Activated CD4-positive, alpha-beta T cell treated with anti-CD3 and anti-CD28 coated beads, Interleukin-2, amount 10 ng/mL, durations not matched to agents 24 days and 14 days (primary cell): ENCODE measurements at regions of chr1 and their contacts with region 1.

Region 1: GRCh38 chr1:183227963-183228649 is 42.0 kb downstream of the LAMC2 start:
- DNase-seq: peak; percentile 82
- H3K4me3 Mint-ChIP-seq: no peak overlapping the region
- H3K27ac Mint-ChIP-seq: no peak overlapping the region
- H3K4me1 Mint-ChIP-seq: peaks cover 6% of the 10 kb centered on the region
- H3K27me3 Mint-ChIP-seq: peaks cover under 1% of the 10 kb centered on the region

Region 2: GRCh38 chr1:182962554-182963115 is 265.5 kb before region 1 on chr1:
- intact Hi-C with region 1: loop called (anchors 10 kb)
- DNase-seq: peak; percentile 76
- H3K4me3 Mint-ChIP-seq: no peak overlapping the region
- H3K27ac Mint-ChIP-seq: no peak overlapping the region
- H3K4me1 Mint-ChIP-seq: peaks cover 3% of the 10 kb centered on the region
- H3K27me3 Mint-ChIP-seq: peaks cover 9% of the 10 kb centered on the region

Region 3: DNA sequence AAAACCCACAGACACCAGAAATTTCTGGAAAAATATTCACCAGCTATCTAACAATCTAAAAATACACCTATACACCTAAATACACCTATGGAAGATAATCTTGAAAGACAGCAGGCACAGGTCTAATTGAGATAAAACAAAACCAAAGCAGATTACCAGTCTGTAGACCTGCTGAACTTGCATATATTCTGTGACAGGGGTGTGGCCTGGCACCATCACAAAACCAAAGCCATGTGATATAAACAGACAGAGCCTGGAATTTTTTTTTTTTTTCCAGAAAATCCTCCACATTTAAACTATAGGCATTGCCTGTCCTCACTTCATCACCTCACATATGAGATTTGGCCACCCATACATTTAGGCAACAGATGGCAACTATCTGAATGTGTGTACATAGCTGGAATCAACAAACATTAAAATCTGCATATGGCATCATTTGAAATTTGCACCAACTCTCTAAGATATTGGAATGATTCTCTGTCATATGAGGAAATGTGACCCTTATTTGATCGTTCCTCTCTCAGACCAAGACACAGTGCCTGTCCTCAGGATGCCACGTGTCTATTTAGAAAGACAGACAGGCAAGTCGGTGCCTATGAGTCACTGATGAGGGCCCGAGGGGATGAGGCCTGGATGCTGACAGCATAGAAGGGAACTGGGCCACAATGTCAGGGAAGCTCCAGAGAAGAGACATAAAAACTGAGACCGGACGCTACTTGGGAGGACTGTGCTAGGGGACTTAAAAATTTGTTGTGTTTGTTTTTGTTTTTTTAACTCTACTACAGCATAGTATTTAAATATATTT is 157.4 kb after region 1 on chr1:
- intact Hi-C with region 1: no loop called
- DNase-seq: no peak
- H3K4me3 Mint-ChIP-seq: no peak overlapping the region
- H3K27ac Mint-ChIP-seq: no peak overlapping the region
- H3K4me1 Mint-ChIP-seq: no peaks in the 10 kb centered on the region
- H3K27me3 Mint-ChIP-seq: peaks cover 15% of the 10 kb centered on the region